CD8-positive, alpha-beta T cell (primary cell): ENCODE measurements at regions of chr9 and their contacts with region 1.

Region 1: GRCh38 chr9:129626079-129626624 is at the start of gene NTMT1:
- DNase-seq: peak; percentile 86 to 96 (median 92)
- ATAC-seq: peak; percentile 74
- H3K4me3 ChIP-seq: peak within 1 kb of the TSS; percentile 94 to 99
- H3K4me3 Mint-ChIP-seq: peak within 1 kb of the TSS; percentile 83
- H3K27ac ChIP-seq: peak within 1 kb of the TSS; percentile 95 to 98
- H3K27ac Mint-ChIP-seq: peak within 1 kb of the TSS; percentile 98
- H3K4me1 ChIP-seq: peaks cover 51% of the 10 kb centered on the region
- H3K4me1 Mint-ChIP-seq: peaks cover 56% of the 10 kb centered on the region
- H3K27me3 ChIP-seq: no peaks in the 10 kb centered on the region
- H3K27me3 Mint-ChIP-seq: peaks cover 11% of the 10 kb centered on the region
- CTCF ChIP-seq: no peak
- total RNA-seq, gene NTMT1: 48.1 to 51.1 TPM

Region 2: GRCh38 chr9:129121483-129121882 is 504.7 kb before region 1 on chr9:
- CTCF ChIA-PET with region 1: interaction called, 13 read pairs
- POLR2A ChIA-PET with region 1: interaction called, 4 read pairs
- intact Hi-C with region 1: no loop called
- DNase-seq: no peak
- ATAC-seq: no peak
- H3K4me3 ChIP-seq: no peak overlapping the region
- H3K4me3 Mint-ChIP-seq: no peak overlapping the region
- H3K27ac ChIP-seq: no peak overlapping the region
- H3K27ac Mint-ChIP-seq: no peak overlapping the region
- H3K4me1 ChIP-seq: no peaks in the 10 kb centered on the region
- H3K4me1 Mint-ChIP-seq: peaks cover 2% of the 10 kb centered on the region
- H3K27me3 ChIP-seq: no peaks in the 10 kb centered on the region
- H3K27me3 Mint-ChIP-seq: no peaks in the 10 kb centered on the region
- CTCF ChIP-seq: no peak

Region 3: DNA sequence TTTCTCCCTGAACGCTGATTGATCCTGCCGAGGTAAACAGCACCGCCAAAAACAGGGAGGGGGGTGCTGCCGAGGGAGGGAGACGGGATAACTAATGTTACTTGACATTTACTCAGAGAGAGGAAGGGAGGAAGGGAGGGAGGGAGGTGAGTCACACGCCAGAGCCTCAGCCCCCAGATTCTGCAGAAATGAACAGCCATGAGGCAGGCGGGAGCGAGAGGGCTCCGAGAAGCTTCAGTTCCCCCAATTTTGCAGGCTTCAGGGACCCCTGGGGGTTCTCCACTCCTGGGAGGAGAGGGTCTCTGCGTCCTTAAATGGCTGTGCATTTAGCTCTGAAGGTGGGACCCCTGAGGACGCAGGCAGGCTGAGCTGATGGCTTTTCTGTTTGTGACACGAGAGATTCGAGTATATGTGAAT is 388.9 kb before region 1 on chr9:
- CTCF ChIA-PET with region 1: no interaction called
- POLR2A ChIA-PET with region 1: no interaction called
- intact Hi-C with region 1: loop called in 1 of 2 experiments (anchors 10 kb)
- DNase-seq: peak in 8 of 9 experiments; percentile 36 to 79 (median 66)
- ATAC-seq: peak; percentile 70
- H3K4me3 ChIP-seq: peak overlapping the region; percentile 51 to 66
- H3K4me3 Mint-ChIP-seq: peak overlapping the region; percentile 88
- H3K27ac ChIP-seq: peak overlapping the region; percentile 56 to 62
- H3K27ac Mint-ChIP-seq: peak overlapping the region; percentile 94
- H3K4me1 ChIP-seq: peaks cover 50% of the 10 kb centered on the region
- H3K4me1 Mint-ChIP-seq: peaks cover 70% of the 10 kb centered on the region
- H3K27me3 ChIP-seq: no peaks in the 10 kb centered on the region
- H3K27me3 Mint-ChIP-seq: no peaks in the 10 kb centered on the region
- CTCF ChIP-seq: no peak

Region 4: DNA sequence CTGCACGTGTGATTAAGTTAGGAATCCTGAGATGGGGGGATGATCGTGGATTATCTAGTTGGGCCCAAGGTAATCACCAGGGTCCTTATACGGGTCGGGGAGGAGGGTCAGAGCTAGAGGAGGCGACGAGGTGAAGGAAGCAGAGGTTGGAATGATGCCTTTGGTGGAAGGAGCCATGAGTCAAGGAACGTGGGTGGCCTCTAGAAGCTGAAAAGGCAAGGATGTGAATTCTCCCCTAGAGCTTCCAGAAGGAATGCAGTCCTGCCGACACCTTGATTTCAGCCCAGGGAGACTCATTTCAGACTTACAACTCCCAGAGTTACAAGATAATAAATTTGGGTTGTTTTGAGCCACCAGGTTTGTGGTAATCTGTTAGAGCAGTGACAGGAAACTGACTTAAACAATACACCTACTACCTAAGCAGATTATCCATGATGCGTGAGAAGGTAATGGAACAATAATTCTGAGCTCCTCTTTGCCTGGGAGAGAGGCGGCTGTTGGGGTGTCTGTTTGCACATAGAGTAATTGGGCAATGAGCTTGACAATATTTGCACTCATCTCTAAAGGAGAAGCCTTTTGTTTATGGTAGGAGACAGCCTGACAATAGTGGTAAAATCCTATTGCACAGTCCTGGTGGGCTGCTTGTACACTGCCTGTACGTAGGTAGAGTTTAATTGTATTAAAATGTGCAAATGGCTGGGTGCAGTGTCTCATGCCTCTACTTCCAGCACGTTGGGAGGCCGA is 318.8 kb before region 1 on chr9:
- CTCF ChIA-PET with region 1: no interaction called
- POLR2A ChIA-PET with region 1: no interaction called
- intact Hi-C with region 1: no loop called
- DNase-seq: no peak
- ATAC-seq: no peak
- H3K4me3 ChIP-seq: no peak overlapping the region
- H3K4me3 Mint-ChIP-seq: no peak overlapping the region
- H3K27ac ChIP-seq: no peak overlapping the region
- H3K27ac Mint-ChIP-seq: no peak overlapping the region
- H3K4me1 ChIP-seq: no peaks in the 10 kb centered on the region
- H3K4me1 Mint-ChIP-seq: peaks cover 7% of the 10 kb centered on the region
- H3K27me3 ChIP-seq: peaks cover 0 to 2% of the 10 kb centered on the region in 2 experiments
- H3K27me3 Mint-ChIP-seq: no peaks in the 10 kb centered on the region
- CTCF ChIP-seq: no peak

Region 5: DNA sequence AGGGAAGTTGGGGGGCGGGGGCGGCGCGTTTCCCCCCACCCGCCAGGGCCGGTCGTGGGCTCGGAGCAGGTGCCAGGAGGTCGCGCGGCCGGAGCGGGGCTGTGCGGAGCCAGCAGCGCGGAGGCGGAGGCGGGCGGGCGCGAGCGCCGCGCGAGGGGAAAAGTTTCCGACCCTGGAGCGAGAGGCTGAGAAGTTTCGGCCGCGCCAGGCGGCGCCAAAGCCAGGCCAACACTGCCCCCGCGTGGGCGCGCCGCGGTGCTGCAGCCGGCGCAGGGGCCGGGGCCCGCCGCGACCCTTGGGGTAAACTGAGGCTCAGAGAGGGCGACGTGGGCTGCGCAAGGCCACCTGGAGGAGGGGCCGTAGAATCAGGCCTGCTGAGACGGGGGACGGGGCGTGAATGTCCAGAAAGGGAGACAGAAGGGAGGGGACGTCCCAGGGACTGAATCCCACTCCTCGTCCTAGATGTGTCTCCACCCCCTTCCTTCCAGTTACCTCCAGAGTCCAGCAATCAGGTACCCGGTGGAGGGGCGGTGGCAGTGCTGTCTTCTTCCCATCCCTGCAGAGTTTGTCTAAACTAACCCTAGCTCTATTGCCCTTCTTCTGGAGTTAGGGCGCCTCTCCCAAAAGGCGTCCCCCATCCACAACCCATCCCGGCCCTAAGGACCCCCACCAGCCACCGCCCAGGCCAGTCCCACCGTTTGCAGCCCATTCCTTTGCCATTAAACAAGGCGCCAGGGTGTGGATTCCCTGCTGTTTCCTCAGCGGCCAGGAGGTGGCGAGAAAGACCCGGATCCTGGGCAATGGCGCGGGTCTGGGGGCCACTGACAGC is 15.5 kb before region 1 on chr9:
- CTCF ChIA-PET with region 1: interaction called, 38 read pairs
- POLR2A ChIA-PET with region 1: interaction called, 3 read pairs
- intact Hi-C with region 1: loop called (anchors 1 kb)
- DNase-seq: peak; percentile 50 to 85 (median 75)
- ATAC-seq: peak; percentile 57
- H3K4me3 ChIP-seq: peak overlapping the region; percentile 36 to 77
- H3K4me3 Mint-ChIP-seq: peak overlapping the region; percentile 76
- H3K27ac ChIP-seq: no peak overlapping the region
- H3K27ac Mint-ChIP-seq: peak overlapping the region; percentile 69
- H3K4me1 ChIP-seq: peaks cover 25% of the 10 kb centered on the region
- H3K4me1 Mint-ChIP-seq: peaks cover 29% of the 10 kb centered on the region
- H3K27me3 ChIP-seq: no peaks in the 10 kb centered on the region
- H3K27me3 Mint-ChIP-seq: no peaks in the 10 kb centered on the region
- CTCF ChIP-seq: peak; percentile 93

Region 6: DNA sequence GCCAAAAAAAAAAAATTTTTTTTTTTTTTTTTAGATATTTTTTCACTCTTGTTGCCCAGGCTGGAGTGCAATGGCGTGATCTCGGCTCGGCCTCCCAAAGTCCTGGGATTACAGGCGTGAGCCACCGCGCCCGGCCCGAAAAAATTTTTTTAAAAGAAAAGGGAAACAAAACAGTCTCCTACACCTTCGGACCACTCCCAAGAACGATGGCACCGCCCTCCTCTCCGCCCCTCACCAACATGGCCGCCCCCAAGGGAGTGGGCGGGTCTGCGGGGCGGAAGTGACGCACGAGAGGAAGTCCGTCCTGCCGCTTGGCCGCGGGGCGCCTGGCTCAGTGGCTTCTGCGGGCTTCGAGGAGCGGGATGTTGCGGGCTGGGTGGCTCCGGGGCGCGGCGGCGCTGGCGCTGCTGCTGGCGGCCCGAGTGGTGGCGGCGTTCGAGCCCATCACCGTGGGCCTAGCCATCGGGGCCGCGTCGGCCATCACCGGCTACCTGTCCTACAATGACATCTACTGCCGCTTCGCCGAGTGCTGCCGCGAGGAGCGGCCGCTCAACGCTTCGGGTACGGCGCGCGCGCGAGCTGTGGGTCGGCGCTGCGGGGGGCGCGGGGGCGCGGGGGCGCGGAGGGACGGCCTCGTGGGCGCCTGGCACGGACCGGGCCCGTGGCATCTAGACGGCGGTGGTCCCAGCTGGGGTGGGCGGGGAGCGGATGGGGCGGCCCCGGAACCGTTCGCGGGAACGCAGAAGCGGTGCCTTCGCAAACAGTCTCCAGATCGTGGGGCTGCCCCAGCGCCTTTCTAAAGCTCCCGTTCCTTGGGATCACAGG is 176.9 kb after region 1 on chr9 and contains the start of gene TOR1B:
- CTCF ChIA-PET with region 1: no interaction called
- POLR2A ChIA-PET with region 1: interaction called, 3 read pairs
- intact Hi-C with region 1: loop called in 1 of 2 experiments (anchors 5 kb)
- DNase-seq: peak; percentile 88 to 99 (median 95)
- ATAC-seq: peak; percentile 95
- H3K4me3 ChIP-seq: peak within 1 kb of the TSS; percentile 81 to 96
- H3K4me3 Mint-ChIP-seq: peak within 1 kb of the TSS; percentile 90
- H3K27ac ChIP-seq: peak within 1 kb of the TSS; percentile 72 to 90
- H3K27ac Mint-ChIP-seq: peak within 1 kb of the TSS; percentile 94
- H3K4me1 ChIP-seq: peaks cover 20% of the 10 kb centered on the region
- H3K4me1 Mint-ChIP-seq: peaks cover 28% of the 10 kb centered on the region
- H3K27me3 ChIP-seq: no peaks in the 10 kb centered on the region
- H3K27me3 Mint-ChIP-seq: no peaks in the 10 kb centered on the region
- CTCF ChIP-seq: no peak
- total RNA-seq, gene TOR1B: 21.3 to 22.4 TPM